Head of caudate nucleus (tissue), 42 donors: ENCODE measurements at regions of chr12 and their contacts with region 1.

Region 1: DNA sequence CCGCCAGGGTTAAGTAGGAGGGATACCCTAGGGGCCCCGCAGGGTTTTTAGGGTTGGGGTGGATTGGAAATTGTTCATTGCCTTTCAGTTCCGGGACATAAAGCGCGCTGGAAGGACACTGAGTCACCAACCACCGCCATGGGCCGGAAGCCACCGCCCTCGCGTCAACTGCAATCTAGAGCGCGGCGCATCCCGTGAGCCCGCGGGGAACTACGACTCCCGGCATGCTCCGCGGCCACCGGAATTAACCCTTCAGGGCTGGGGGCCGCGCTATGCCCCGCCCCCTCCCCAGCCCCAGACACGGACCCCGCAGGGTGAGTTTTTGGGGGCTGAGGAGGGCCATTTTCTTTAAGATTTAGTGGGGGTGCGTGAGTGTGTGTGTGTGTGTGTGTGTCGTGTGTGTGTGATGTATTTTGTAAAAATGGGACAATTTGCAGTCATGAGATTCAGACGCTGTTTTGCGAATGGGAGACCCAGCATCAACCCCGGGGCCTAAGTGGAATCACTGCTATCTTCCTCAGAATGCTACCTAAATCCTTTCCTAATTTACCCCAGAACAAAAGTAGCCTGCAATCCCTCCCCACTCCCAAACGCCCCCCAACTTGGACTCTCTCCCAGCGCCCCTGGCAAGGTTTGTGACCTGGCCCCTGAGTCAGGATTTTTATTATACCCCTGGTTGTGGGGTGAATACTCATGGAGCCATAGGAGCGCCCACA is at the start of gene MYL6B:
- DNase-seq: peak; percentile 87 to 98 (median 94)

Region 2: DNA sequence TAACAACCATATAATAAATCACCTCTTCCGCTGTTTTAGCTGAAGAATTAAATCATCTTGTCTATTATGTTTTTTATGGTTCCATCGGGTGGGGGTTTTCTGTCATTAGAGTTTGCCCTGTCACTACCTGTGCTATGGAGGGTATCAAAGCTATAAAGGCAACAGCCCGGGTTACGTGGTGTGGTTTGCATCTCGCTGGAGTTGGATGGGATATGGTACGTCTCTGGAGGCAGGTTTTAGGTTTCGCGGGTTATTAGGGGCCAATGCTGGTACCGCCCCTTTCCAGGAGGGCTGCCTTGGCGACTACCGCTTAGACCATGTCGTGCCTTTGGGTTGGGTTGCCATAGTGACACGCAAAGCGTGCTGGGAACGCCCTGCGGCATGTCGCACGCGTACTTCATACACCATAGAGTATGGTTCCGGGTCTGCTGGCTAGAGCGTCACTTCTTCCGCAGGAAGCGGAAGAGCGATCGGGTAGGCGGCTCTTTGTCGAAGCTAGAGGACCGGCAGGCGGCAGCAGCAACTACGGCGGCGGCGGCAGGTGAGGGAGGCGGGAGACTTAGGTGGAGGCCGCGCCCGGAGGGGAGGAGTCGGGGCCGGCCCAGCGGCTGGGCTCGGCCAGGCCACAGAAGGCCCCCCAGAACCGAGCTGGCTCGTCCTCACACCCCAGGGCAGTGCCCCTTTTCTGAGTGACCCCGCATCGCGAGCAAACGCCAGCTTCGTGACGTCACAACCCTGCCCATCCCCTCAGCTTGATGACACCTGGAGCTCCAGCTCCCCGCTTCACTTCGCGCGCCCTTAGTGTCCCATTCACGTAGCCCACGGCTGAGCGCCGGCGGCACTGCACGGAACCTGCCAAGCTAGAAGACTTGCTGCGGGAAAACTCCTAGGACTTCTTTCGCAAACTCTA is 34.4 kb before region 1 on chr12 and contains the start of gene ZC3H10:
- intact Hi-C with region 1: loop called (anchors 5 kb)
- DNase-seq: peak; percentile 92 to 99 (median 97)

Region 3: DNA sequence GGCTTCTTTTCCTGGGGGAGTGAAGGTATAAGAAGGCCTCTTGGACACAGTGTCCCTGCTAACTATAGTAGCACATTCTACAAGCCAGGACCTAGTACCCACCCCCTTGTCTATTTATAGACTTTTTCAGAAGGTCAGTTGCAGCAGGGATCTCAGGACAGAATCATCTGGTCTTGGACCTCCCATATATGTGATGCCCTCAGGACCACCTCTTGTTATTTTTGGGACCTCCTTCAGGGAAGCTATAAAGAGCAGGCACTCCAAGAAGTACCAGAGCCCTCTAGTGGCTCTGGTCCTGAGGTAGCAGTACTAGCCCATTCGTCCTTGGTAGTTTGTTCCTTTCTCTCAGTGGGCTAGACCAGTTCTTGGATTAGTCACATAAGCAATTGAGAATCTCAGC is 118.6 kb after region 1 on chr12:
- intact Hi-C with region 1: no loop called
- DNase-seq: peak in 1 of 42 donors; percentile 5